Endothelial cell of umbilical vein (primary cell): ENCODE measurements at regions of chr1 and their contacts with region 1.

Region 1: DNA sequence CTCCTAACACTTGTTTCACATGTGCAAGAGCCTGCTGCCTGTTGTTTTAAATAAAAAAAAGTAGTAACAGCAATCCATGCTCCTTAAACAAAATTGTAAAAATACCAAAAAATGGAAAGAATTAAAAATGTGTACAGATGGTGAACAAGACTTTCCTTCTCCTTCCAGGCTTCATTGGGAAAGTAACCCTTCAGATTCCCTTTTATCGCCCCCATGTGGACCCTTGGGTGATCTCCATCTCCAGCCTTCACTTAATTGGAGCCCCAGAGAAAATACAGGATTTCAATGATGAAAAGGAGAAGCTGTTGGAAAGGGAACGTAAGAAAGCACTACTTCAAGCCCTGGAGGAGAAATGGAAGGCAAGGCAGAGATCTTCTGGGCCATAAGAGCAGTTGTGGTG is 14.2 kb downstream of the VPS13D start:
- DNase-seq: peak; percentile 35
- H3K4me3 ChIP-seq: no peak overlapping the region
- H3K27ac ChIP-seq: no peak overlapping the region
- H3K4me1 ChIP-seq: no peaks in the 10 kb centered on the region
- H3K27me3 ChIP-seq: no peaks in the 10 kb centered on the region
- CTCF ChIP-seq: peak; percentile 53 to 62
- POLR2A ChIP-seq: no peak

Region 2: DNA sequence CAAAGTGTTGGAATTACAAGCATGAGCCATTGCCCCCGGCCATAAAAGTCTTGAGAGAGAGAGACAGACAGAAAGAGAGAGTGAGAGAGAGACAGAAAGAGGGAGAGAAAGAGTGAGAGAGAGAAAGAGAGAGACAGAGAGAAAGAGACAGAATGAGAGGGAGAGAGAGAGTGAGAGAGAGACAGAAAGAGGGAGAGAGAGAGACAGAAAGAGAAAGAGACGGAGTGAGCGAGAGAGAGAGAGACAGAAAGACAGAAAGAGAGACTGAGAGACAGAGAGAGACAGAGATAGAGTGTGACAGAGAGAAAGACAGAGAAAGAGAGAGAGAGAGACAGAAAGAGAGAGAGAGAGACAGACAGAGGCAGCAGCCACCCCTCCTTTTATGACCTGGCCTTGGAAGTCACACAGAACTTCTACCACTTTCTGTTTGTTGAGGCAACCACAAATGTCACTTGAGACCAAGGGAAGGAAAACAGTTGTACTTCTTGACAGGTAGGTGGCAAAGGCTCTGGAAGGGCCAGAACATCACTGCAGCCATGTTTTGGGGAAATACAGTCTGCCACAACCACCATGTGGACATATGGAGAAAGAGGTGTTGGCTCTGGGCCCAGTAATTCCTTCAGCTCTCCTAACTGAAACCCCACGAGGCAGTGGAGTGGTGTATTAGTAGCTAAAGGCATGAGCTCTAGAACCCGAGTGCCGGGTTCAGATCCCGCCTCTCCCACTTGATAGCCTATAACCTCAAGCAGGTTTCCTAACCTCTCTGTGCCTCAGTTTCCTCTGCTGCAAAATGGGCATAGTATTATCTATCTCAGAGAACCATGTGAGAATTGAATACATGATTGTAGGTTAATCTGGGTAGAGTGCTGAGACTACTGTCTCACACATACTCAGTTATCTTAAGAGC is 130.4 kb before region 1 on chr1:
- CTCF ChIA-PET with region 1: interaction called, 20 read pairs
- POLR2A ChIA-PET with region 1: no interaction called
- dilution Hi-C with region 1: no loop called
- intact Hi-C with region 1: loop called (anchors 1 kb)
- DNase-seq: no peak
- H3K4me3 ChIP-seq: no peak overlapping the region
- H3K27ac ChIP-seq: no peak overlapping the region
- H3K4me1 ChIP-seq: no peaks in the 10 kb centered on the region
- H3K27me3 ChIP-seq: peaks cover 0 to 3% of the 10 kb centered on the region in 2 experiments
- CTCF ChIP-seq: no peak
- POLR2A ChIP-seq: no peak

Region 3: DNA sequence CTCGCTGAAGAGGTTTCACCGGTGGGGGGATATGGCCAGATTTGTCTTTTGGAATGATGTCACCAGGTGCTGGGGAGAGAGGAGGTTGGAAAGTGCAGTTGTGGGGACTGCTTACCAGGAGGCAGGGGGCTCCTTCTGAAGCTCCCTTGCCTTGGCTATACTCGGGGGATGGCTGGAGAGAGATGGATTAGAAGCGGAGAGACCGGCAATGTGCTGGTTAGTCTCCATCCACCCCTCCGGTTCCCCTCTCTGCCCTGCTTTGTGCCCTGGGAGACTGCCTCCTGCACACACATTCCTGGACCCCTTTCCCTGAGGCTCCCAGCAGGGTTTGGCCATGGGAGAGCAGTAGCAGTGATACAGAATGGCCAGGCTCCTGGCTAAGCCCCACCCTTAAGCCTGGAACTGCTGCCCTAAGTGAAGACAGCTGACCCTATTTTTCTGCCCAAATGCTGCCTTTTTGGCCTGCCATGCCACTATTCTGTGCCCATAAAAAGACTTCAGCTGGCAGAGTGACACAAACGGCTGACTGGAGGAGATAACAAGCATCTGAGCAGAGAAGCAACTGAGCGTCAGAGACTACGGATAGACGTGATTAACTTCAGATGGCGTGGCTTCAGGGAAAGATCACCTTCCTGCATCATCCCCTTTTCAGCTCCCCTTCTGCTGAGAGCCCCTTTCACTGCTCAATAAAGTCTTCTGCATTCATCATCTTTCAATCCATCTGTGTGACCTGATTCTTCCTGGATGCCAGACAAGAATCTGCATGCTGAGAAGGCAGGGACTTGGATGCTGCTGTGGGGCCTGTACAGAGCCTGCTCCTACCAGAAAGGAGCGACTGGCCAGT is 28.7 kb before region 1 on chr1:
- CTCF ChIA-PET with region 1: no interaction called
- POLR2A ChIA-PET with region 1: no interaction called
- dilution Hi-C with region 1: no loop called
- intact Hi-C with region 1: no loop called
- DNase-seq: no peak
- H3K4me3 ChIP-seq: no peak overlapping the region
- H3K27ac ChIP-seq: no peak overlapping the region
- H3K4me1 ChIP-seq: no peaks in the 10 kb centered on the region
- H3K27me3 ChIP-seq: peaks cover 0 to 12% of the 10 kb centered on the region in 2 experiments
- CTCF ChIP-seq: no peak
- POLR2A ChIP-seq: no peak